BJ (cell line): ENCODE measurements at regions of chr17 and their contacts with region 1.

Region 1: GRCh38 chr17:28661635-28662537 is at the starts of genes SDF2 and SUPT6H:
- DNase-seq: peak; percentile 34
- H3K4me3 ChIP-seq: peak within 1 kb of the TSS; percentile 77
- H3K27me3 ChIP-seq: no peaks in the 10 kb centered on the region
- CTCF ChIP-seq: no peak
- polyA plus RNA-seq, gene SDF2: 74.5 and 77.5 TPM in 2 replicates
- polyA plus RNA-seq, gene SUPT6H: 31.7 and 37.1 TPM in 2 replicates

Region 2: DNA sequence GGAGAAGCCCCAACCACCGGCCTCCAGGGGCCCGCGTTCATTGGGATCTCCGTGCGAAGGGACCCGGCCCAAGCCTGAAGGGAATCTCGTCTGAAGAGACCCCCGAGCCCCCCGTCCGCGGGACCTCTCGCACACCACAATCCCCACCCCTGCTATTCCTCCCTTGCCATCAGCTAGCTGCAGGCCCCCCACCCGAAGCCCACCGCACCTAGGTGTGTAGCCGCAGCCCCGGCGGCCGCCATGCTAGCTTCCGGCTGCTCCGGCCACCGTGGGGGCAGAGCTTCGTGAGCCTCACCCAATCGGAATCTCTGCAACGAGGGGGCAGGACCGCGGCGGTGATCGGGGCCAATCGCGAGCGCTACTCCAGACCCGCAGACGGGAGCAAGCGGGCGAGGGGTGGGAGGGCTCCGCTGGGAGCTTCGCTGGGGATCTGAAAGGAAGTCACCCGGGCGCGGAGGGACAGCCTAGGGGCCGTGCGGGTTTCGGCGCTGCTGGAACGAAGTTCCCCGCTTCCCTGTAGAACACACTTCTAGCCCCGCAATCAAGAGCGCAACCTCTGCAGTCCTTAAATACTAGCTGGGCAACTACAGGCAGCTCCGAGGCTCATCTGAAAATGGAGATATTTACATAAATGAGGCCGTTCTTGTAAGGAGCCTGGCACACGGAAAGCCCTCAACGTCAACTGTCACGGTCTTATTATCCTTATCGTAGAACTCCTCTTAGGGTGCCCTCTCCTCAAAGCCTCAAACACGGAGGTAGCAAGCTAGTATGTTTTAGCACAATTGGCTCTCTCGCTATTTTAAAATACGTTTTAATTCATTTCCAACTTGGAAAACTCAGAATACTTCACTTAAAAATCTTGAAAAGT is 90.4 kb before region 1 on chr17 and contains the start of gene PIGS:
- CTCF ChIA-PET with region 1: no interaction called
- POLR2A ChIA-PET with region 1: no interaction called
- DNase-seq: peak; percentile 62
- H3K4me3 ChIP-seq: peak within 1 kb of the TSS; percentile 90
- H3K27me3 ChIP-seq: no peaks in the 10 kb centered on the region
- CTCF ChIP-seq: no peak
- polyA plus RNA-seq, gene PIGS: 33.4 and 99.5 TPM in 2 replicates

Region 3: GRCh38 chr17:28644985-28645939 is 16.6 kb before region 1 on chr17 and contains the start of gene BLTP2:
- CTCF ChIA-PET with region 1: interaction called, 13 read pairs
- POLR2A ChIA-PET with region 1: interaction called, 3 read pairs
- DNase-seq: peak; percentile 65
- H3K4me3 ChIP-seq: peak within 1 kb of the TSS; percentile 90
- H3K27me3 ChIP-seq: no peaks in the 10 kb centered on the region
- CTCF ChIP-seq: no peak
- polyA plus RNA-seq, gene BLTP2: 142 and 206 TPM in 2 replicates